ENCODE measurements at regions of chr16 and their contacts with region 1.

Region 1: DNA sequence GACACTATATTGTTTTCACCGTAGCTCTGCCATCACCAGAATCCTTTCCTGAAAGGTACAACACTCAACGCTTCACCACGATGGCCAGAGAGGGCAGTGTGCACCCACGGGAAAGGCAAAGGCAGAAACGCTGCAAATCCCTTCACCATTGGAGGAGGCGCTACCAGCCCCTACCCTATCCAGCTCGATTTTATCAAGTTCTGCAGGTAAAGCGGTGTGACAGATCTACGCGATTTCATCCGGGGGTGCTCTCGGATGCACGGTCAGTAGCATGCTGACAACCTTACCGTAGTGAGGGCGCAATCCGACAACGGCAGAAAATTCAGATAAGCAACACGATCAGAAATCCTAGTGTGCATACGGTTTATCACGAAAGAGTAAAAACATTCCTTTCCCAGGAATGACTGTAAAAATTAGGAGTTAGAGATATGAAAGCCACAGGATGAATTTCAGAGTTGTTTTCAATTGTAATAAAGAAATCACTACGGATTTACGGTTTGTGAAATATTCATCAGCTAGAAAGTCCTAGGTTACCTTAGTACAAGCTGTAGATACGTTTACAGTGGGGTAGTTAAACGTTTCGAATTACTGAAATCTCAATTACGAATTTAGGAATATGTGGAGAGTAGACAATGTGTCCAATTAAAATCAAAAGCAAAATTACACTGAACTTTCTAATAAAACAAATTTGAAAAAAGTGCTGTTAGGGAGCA is 1.8 kb downstream of the NETO2 start:
- DNase-seq: peak; percentile 90
- H3K4me3 ChIP-seq: peak overlapping the region in 3 of 4 donors; percentile 60 to 82 (median 60)
- H3K27ac ChIP-seq: peak overlapping the region in 1 of 4 donors; percentile 81
- H3K4me1 ChIP-seq: peaks cover 3 to 25% (median 13%) of the 10 kb centered on the region in 4 donors
- H3K27me3 ChIP-seq: peaks cover 41% of the 10 kb centered on the region
- CTCF ChIP-seq: peak; percentile 81 to 85 (median 84)
- EP300 ChIP-seq: no peak
- POLR2A ChIP-seq: no peak

Region 2: DNA sequence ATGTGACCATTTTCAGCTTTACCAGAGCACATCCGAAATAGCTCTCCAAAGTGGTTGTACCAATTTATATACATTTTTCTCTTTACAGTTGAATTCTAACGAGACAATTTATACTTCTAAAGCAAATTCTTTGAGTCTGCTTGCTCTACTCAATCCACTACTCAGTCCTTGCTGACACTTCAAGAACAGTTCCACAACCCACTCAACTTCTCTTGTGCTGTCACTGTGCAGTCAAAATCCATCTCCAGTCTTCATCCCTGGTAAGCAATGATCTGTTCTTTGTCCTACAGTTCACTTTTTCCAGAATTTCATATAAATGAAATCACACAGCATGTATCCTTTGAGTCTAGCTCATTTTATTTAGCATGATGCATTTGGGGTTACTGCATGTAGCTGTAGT is 28.8 kb before region 1 on chr16:
- in situ Hi-C with region 1: no loop called
- intact Hi-C with region 1: no loop called
- DNase-seq: no peak
- H3K4me3 ChIP-seq: no peak overlapping the region
- H3K27ac ChIP-seq: no peak overlapping the region
- H3K4me1 ChIP-seq: no peaks in the 10 kb centered on the region
- H3K27me3 ChIP-seq: no peaks in the 10 kb centered on the region
- CTCF ChIP-seq: no peak
- EP300 ChIP-seq: no peak
- POLR2A ChIP-seq: no peak

Region 3: DNA sequence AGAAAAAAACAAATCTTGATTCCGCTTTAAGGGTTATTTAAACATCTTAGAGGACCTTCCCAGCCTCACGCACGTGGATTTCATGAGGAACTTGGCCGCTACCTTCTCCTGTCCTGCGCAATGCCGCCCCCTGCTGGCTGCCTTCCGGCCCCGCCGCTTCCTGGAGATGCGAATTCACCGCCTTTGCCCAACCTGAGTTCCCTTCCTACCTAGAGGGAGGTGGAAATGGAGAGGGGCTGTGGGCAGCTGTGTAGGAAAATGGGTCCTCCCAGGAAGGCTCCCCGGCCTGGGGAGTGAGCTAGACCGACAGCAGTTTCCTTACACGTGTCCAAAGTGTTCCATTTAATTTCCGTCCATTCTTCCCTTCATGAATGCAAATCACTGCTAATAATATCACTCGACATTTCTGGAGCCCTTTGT is 1014.9 kb after region 1 on chr16:
- in situ Hi-C with region 1: loop called (anchors 25 kb)
- intact Hi-C with region 1: loop called (anchors 5 kb)
- DNase-seq: peak; percentile 78
- H3K4me3 ChIP-seq: no peak overlapping the region
- H3K27ac ChIP-seq: no peak overlapping the region
- H3K4me1 ChIP-seq: peaks cover 0 to 3% (median 0%) of the 10 kb centered on the region in 4 donors
- H3K27me3 ChIP-seq: peaks cover 2% of the 10 kb centered on the region
- CTCF ChIP-seq: peak; percentile 79 to 93 (median 90)
- EP300 ChIP-seq: no peak
- POLR2A ChIP-seq: no peak